CD4-positive, alpha-beta memory T cell (primary cell): ENCODE measurements at regions of chr2 and their contacts with region 1.

Region 1: DNA sequence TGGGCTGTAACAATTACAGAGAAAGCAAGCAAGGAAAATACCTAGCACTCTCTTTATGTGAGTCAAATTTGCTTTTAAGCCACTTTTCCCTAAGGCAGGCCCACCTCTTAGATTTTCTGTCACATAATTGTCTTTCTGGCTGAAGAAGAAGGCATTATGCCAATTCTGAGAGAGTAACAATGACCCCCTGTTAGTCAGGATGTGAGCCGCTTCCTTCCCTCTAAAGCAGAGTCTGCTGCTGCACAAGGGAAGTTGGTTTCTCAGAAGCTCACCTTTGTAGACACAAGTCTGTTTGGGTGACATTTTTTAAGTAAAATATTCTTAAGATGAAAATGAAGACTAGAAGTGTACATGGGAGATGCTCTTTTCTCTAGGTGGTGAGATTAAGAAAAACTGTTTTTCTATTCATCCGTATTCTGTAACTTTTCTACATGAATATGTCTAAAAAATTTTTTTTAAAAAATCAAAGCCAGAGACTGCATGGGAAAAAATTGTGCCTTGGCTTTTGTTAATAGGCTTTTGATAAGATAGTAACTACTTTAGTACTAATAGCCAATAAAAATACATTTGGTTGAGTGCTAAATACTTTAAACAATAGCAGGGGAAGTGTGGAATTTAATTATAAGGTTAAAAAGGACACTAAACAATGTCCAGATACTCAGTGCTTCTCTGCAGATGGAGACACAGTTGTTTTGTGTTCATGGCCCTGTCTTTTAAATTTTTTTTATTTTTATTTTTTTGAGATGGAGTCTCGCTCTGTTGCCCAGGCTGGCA is 33.4 kb upstream of the VPS54 start:
- DNase-seq: peak in 2 of 5 donors; percentile 11 to 17
- H3K4me3 ChIP-seq: no peak overlapping the region
- H3K4me3 Mint-ChIP-seq: peak overlapping the region in 1 of 8 donors; percentile 30
- H3K27ac ChIP-seq: no peak overlapping the region
- H3K27ac Mint-ChIP-seq: peak overlapping the region in 4 of 7 donors; percentile 16 to 34 (median 24)
- H3K4me1 ChIP-seq: peaks cover 28% of the 10 kb centered on the region
- H3K4me1 Mint-ChIP-seq: peaks cover 16 to 42% (median 29%) of the 10 kb centered on the region in 4 donors
- H3K27me3 ChIP-seq: no peaks in the 10 kb centered on the region
- H3K27me3 Mint-ChIP-seq: no peaks in the 10 kb centered on the region

Region 2: GRCh38 chr2:64036034-64036705 is 16.5 kb before region 1 on chr2:
- CTCF ChIA-PET with region 1: interaction called, 11 read pairs
- POLR2A ChIA-PET with region 1: no interaction called
- intact Hi-C with region 1: no loop called
- DNase-seq: peak; percentile 50 to 69 (median 64)
- H3K4me3 ChIP-seq: no peak overlapping the region
- H3K4me3 Mint-ChIP-seq: peak overlapping the region; percentile 16 to 81 (median 67)
- H3K27ac ChIP-seq: no peak overlapping the region
- H3K27ac Mint-ChIP-seq: peak overlapping the region; percentile 48 to 88 (median 72)
- H3K4me1 ChIP-seq: peaks cover 38% of the 10 kb centered on the region
- H3K4me1 Mint-ChIP-seq: peaks cover 31 to 59% (median 39%) of the 10 kb centered on the region in 4 donors
- H3K27me3 ChIP-seq: no peaks in the 10 kb centered on the region
- H3K27me3 Mint-ChIP-seq: no peaks in the 10 kb centered on the region

Region 3: DNA sequence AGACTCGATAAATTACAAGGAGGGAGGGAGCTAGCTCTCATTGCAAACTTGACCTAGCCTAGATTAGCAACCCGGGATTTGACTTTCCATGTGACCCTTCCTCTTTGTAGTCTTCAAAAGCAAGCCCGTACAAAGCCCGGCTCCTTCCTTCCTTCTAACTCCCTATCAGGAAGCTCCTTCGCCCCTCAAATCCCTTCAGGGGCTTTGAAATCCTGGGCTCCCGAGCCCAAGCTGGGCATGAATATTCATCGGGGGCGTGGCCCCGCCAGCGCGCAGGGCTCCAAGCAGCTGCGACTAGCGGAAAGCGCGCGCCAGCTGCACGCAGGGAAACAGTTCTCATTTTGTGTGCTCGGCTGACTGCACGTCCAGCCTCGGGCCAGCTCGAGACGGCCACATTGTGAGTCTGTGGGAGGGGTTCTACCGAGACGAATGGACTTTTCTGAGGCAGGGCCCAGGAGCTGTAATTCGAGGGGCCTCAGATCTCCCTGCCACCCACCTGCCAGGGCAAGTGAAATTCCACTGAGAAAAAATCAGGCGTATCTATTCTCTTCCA is 175.5 kb after region 1 on chr2:
- CTCF ChIA-PET with region 1: no interaction called
- POLR2A ChIA-PET with region 1: no interaction called
- intact Hi-C with region 1: loop called (anchors 2 kb)
- DNase-seq: peak; percentile 39 to 53 (median 46)
- H3K4me3 ChIP-seq: peak overlapping the region; percentile 30 to 50
- H3K4me3 Mint-ChIP-seq: peak overlapping the region; percentile 90 to 95 (median 93)
- H3K27ac ChIP-seq: peak overlapping the region; percentile 20
- H3K27ac Mint-ChIP-seq: peak overlapping the region; percentile 74 to 96 (median 93)
- H3K4me1 ChIP-seq: peaks cover 17% of the 10 kb centered on the region
- H3K4me1 Mint-ChIP-seq: peaks cover 9 to 27% (median 16%) of the 10 kb centered on the region in 4 donors
- H3K27me3 ChIP-seq: no peaks in the 10 kb centered on the region
- H3K27me3 Mint-ChIP-seq: peaks cover 0 to 4% of the 10 kb centered on the region in 2 donors

Region 4: DNA sequence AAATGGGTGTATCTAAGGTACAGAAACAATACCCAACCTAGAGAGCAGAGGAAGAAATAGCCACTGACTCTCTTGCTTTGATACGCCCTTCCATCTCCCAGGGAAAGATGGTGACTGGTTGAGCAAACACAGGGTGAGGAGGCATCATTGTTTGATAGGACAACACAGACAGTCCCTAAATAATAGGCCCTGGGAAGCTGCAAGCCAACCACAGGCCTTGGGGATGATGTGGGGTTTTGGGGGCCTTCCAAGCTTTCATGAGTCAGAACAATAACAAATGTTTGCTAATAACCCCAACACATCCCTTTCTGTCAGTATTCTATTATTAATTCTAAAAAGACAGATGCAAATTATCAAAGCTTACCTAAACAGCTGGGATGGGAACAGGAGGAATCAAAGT is 411.1 kb after region 1 on chr2:
- CTCF ChIA-PET with region 1: no interaction called
- POLR2A ChIA-PET with region 1: no interaction called
- intact Hi-C with region 1: no loop called
- DNase-seq: no peak
- H3K4me3 ChIP-seq: no peak overlapping the region
- H3K4me3 Mint-ChIP-seq: no peak overlapping the region
- H3K27ac ChIP-seq: no peak overlapping the region
- H3K27ac Mint-ChIP-seq: no peak overlapping the region
- H3K4me1 ChIP-seq: no peaks in the 10 kb centered on the region
- H3K4me1 Mint-ChIP-seq: no peaks in the 10 kb centered on the region
- H3K27me3 ChIP-seq: no peaks in the 10 kb centered on the region
- H3K27me3 Mint-ChIP-seq: peaks cover 0 to 1% of the 10 kb centered on the region in 2 donors

Region 5: DNA sequence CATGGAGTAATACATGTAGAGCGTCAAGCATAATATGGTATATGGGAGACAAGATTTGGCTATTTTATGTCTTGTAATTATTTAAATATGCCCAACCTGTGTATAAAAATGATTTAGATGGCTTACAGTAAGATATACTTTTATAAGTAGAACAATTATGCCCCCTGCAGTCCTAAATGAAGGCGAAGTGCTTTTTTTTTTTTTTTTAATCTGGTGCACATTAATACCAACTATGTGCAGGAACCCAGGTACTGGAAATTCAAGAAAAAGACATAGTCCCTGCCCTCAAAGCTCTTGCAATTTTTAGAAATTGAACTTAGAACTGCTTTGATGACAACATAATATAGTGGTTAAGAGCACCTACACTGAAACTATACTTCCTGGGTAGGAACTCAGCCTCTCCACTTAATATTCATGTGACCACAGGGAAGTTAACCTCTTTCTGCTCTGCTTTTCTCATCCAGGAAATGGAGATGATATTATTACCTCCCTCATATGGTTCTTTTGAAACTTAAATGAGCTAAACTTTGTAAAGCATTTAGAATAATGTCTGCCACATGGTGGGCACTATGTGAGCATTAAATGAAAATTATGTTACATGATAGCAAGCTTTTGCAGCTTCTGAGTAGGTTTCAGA is 509.6 kb after region 1 on chr2:
- CTCF ChIA-PET with region 1: interaction called, 5 read pairs
- POLR2A ChIA-PET with region 1: no interaction called
- intact Hi-C with region 1: loop called (anchors 1 kb)
- DNase-seq: peak in 4 of 5 donors; percentile 42 to 52 (median 46)
- H3K4me3 ChIP-seq: no peak overlapping the region
- H3K4me3 Mint-ChIP-seq: peak overlapping the region in 1 of 8 donors; percentile 25
- H3K27ac ChIP-seq: no peak overlapping the region
- H3K27ac Mint-ChIP-seq: peak overlapping the region in 3 of 7 donors; percentile 10 to 60 (median 43)
- H3K4me1 ChIP-seq: peaks cover 22% of the 10 kb centered on the region
- H3K4me1 Mint-ChIP-seq: peaks cover 17 to 43% (median 25%) of the 10 kb centered on the region in 4 donors
- H3K27me3 ChIP-seq: no peaks in the 10 kb centered on the region
- H3K27me3 Mint-ChIP-seq: no peaks in the 10 kb centered on the region